K562 (cell line): ENCODE measurements at regions of chr2 and their contacts with region 1.

Region 1: DNA sequence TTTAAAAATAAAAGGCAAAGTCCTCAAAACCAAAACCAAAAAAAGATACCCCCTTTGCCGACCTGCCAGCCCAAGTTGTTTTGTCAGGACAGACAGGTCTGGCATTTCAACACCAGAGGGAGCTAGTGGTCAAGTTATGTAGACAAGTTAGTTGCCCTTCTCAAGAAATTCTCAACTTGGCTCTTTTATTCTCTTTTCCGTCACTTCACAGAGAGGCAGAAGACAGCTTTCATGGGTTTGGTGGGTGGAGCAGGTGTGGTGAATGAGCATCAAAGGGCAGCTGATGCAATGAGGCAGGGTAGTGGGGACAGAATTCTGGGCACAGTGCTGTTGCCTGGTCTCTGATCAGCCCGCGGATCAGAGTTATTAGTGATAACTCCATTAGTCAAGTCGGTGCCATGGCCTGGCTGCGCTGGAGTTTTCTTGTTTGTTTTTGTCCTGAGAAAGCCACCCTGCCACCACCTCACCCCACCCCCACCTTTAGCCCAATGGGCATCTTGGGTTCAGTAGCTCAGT is 303.7 kb upstream of the EPAS1 start:
- DNase-seq: peak; percentile 60 to 77 (median 66)
- ATAC-seq: peak; percentile 81
- H3K4me3 ChIP-seq: no peak overlapping the region
- H3K27ac ChIP-seq: no peak overlapping the region
- H3K4me1 ChIP-seq: no peaks in the 10 kb centered on the region
- H3K27me3 ChIP-seq: peaks cover 0 to 20% of the 10 kb centered on the region in 2 experiments; a peak in 2 of 5 replicates
- CTCF ChIP-seq: peak; percentile 62 to 81 (median 76)
- EP300 ChIP-seq: no peak
- POLR2A ChIP-seq: no peak
- RAD21 ChIP-seq: peak; percentile 85 to 87

Region 2: DNA sequence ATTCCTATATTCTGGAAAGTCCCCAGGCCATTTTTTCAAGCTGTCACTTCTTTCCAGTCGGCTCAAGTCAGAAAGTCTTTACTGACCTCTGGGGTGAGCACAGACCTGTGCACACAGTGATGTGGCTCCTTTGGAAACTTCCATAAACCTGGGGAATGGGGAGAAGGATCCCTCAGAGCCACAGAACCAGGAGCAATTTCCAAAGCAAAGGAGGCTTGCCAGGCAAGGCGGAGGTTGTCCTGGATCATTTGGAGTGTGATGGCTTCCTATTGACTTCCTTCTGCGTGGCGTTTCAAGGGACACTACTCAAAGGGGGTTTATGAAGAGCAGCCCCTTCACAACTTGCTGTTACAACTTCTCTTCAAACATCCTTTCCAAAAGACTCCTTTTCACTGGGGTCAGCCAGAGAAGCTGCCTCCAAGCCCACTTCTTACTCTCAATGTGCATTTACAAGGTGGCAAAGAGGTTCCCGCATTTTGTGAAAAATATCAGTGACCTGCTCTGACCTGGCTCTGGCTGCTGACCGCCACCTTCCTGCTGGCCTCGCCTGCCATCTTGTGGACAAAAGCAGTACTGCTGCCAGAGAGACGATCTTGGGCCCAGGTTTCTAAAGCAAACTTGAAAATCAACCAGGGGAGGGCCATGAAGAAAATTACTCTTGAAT is 467.6 kb after region 1 on chr2:
- CTCF ChIA-PET with region 1: interaction called, 36 read pairs
- POLR2A ChIA-PET with region 1: no interaction called
- in situ Hi-C with region 1: no loop called
- intact Hi-C with region 1: loop called (anchors 1 kb)
- DNase-seq: peak; percentile 76 to 84 (median 82)
- ATAC-seq: peak; percentile 83
- H3K4me3 ChIP-seq: no peak overlapping the region
- H3K27ac ChIP-seq: no peak overlapping the region; the same call in 2 of the 3 replicates
- H3K4me1 ChIP-seq: peaks cover 8 to 10% of the 10 kb centered on the region in 2 experiments; a peak in 4 of 5 replicates
- H3K27me3 ChIP-seq: no peaks in the 10 kb centered on the region
- CTCF ChIP-seq: peak; percentile 94 to 98 (median 97)
- EP300 ChIP-seq: no peak
- POLR2A ChIP-seq: no peak
- RAD21 ChIP-seq: peak; percentile 97 to 98

Region 3: GRCh38 chr2:46887028-46887885 is 893.7 kb after region 1 on chr2:
- CTCF ChIA-PET with region 1: no interaction called
- POLR2A ChIA-PET with region 1: no interaction called
- in situ Hi-C with region 1: loop called (anchors 10 kb)
- intact Hi-C with region 1: loop called (anchors 2 kb)
- DNase-seq: no peak
- ATAC-seq: no peak
- H3K4me3 ChIP-seq: no peak overlapping the region
- H3K27ac ChIP-seq: no peak overlapping the region
- H3K4me1 ChIP-seq: no peaks in the 10 kb centered on the region
- H3K27me3 ChIP-seq: peaks cover 14 to 36% of the 10 kb centered on the region in 2 experiments
- CTCF ChIP-seq: no peak
- EP300 ChIP-seq: no peak
- POLR2A ChIP-seq: no peak
- RAD21 ChIP-seq: no peak

Region 4: DNA sequence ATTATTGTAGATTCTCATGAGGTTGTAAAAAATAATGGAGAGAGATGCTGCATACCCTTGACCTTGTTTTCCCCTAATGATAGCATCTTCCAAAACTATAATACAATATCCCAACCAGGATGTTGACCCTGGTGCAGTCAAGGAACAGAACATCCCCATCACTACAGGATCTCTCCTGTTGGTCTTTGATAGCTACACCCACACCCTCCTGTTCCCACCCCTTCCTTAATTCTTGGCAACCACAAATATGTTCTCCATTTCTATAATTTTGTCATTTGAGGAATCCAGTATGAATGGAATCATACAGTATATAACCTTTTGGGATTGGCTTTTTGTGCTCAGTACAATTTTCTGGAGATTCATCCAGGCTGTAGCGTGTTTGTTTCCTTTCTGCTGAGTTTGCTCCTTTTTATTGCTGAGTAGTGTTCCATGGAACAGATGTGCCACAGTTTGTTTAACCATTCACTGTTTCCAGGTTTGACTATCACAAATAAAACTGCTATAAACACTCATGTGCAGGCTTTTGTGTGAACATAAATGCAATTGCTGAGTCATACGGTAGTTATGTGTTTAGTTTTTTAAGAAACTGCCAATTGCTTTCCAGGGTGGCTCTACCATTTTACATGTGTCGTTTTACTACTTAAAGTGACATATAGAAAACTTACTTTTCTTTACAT is 899.9 kb after region 1 on chr2:
- CTCF ChIA-PET with region 1: no interaction called
- POLR2A ChIA-PET with region 1: no interaction called
- in situ Hi-C with region 1: loop called (anchors 10 kb)
- intact Hi-C with region 1: loop called (anchors 2 kb)
- DNase-seq: peak in 2 of 4 experiments; percentile 50 to 55
- ATAC-seq: no peak
- H3K4me3 ChIP-seq: no peak overlapping the region
- H3K27ac ChIP-seq: no peak overlapping the region
- H3K4me1 ChIP-seq: no peaks in the 10 kb centered on the region
- H3K27me3 ChIP-seq: no peaks in the 10 kb centered on the region
- CTCF ChIP-seq: no peak
- EP300 ChIP-seq: no peak
- POLR2A ChIP-seq: no peak
- RAD21 ChIP-seq: no peak